ENCODE measurements at regions of chr16 and their contacts with region 1.

Region 1: DNA sequence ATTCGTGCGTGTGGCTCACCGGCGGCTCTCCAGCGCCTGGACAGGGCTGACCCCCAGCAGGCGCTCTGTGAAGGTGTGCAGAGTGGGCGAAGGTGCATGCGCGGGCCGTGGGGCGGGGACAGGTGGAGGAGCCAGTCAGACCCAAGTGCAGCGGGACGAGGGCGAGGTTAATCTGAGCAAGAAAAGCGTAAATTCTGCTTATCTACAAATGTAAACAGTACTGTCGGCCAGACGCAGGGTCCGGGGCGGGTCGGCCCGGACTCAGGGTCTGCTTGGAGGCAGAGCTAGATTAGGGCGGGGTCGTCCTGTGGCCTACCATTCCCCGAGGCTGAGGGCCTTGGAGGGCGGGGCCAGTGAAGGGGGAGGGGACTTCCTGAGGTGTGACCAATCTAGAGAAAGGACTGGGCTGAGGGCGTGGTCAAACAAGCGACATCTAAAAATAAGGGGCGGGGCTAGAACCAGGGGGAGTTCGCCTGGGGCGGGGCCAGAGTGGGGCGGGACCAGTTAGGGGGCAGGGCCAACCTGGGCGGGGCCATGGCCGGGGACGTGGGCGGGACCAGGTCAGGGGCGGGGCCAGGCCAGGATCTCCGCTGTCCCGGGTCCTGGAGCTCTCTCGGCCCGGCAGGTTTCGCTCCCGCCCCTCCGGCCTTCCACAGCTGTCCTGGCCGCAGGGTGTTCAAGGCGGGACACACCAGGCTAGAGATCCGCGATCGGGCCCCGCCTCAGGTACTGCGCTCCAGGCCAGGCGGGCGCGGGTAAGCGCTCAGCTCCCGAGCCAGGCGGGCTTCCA is at the start of gene SEC14L5:
- DNase-seq: peak; percentile 98 to 100 (median 100)
- ATAC-seq: peak; percentile 90 to 95 (median 94)
- H3K4me3 ChIP-seq: peak within 1 kb of the TSS; percentile 22 to 59 (median 46)
- H3K27ac ChIP-seq: peak within 1 kb of the TSS in 2 of 3 donors; percentile 45 to 72
- H3K4me1 ChIP-seq: peaks cover 0 to 18% (median 4%) of the 10 kb centered on the region in 4 donors
- H3K27me3 ChIP-seq: no peaks in the 10 kb centered on the region
- CTCF ChIP-seq: peak in 1 of 4 donors; percentile 5
- POLR2A ChIP-seq: peak; percentile 69
- total RNA-seq, gene SEC14L5: 0.09 to 1.1 (median 0.60) TPM in 5 of 6 experiments, not detected in the other

Region 2: DNA sequence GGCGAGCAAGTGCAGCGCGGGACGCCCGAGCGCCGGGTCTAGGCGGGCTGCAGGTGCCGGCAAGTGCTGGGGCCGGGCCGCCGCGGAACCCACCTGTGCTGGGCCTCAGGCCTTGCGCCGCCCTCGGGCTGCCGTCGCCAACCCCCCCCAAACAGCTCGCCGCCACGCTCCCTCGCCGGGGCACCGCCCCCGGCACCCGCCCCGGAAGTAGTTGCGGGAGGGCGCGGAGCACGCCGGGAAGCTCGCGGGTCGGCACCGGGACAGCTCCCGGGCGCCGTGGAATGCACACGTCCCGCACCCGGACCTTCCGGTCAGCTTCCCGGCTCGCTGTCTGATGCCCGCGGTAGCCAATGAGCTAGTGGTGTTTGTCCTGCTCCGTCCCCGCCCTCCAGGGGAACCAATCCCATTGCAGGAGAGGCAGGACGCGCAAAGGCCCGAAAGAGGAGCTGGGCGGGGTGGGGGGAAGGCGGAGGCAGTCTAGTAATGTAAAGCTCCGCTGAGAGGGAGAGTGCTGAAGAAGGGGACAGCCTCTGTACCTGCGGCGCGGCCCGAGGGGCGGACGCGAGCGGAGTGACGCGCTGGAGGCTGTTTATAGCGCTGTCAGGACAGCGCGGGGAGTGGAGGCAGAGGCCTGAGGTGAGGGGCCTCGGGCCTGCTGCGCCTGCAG is 223.7 kb before region 1 on chr16 and contains the starts of genes ANKS3 and DNAAF8:
- intact Hi-C with region 1: loop called in 1 of 2 experiments (anchors 10 kb)
- DNase-seq: peak; percentile 97 to 99 (median 98)
- ATAC-seq: peak; percentile 96 to 98 (median 97)
- H3K4me3 ChIP-seq: peak within 1 kb of the TSS; percentile 80 to 97 (median 94)
- H3K27ac ChIP-seq: peak within 1 kb of the TSS in 2 of 3 donors; percentile 12 to 44
- H3K4me1 ChIP-seq: peaks cover 0 to 11% (median 0%) of the 10 kb centered on the region in 4 donors
- H3K27me3 ChIP-seq: no peaks in the 10 kb centered on the region
- CTCF ChIP-seq: no peak
- POLR2A ChIP-seq: peak; percentile 39
- total RNA-seq, gene ANKS3: 4.7 to 10.7 (median 7.6) TPM
- total RNA-seq, gene DNAAF8: 0.12 to 0.92 (median 0.42) TPM in 5 of 6 experiments, not detected in the other

Region 3: DNA sequence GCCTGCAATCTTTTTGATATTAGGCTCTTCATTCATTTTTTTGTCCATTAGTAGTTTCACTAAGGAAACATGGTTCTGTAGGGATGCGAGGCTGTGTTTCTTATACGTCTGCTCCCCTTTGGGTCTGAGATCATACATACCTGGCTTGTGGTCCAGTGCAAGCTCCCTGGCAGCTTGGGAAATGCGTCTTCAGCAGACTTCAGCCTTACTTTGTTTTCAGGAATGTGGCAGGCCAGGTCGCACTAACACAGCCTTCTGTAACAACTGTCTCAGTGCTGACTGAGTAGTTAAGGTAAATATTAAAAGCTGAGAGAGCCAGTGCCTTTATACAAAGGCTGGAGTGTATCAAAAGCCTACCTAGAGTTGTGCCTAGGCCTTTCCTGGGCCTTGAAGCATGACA is 1110.1 kb after region 1 on chr16:
- intact Hi-C with region 1: no loop called
- DNase-seq: no peak
- ATAC-seq: no peak
- H3K4me3 ChIP-seq: no peak overlapping the region
- H3K27ac ChIP-seq: no peak overlapping the region
- H3K4me1 ChIP-seq: no peaks in the 10 kb centered on the region
- H3K27me3 ChIP-seq: no peaks in the 10 kb centered on the region
- CTCF ChIP-seq: no peak
- POLR2A ChIP-seq: no peak